WTC11 (cell line): ENCODE measurements at regions of chr2 and their contacts with region 1.

Region 1: GRCh38 chr2:58762176-58762781 is 521.2 kb upstream of the FANCL start:
- DNase-seq: peak; percentile 82
- ATAC-seq: peak; percentile 98
- H3K4me3 Mint-ChIP-seq: no peak overlapping the region
- H3K27ac Mint-ChIP-seq: no peak overlapping the region
- H3K4me1 Mint-ChIP-seq: peaks cover 37% of the 10 kb centered on the region
- H3K27me3 Mint-ChIP-seq: no peaks in the 10 kb centered on the region
- CTCF ChIP-seq: peak; percentile 74

Region 2: GRCh38 chr2:58798676-58799208 is 36.5 kb after region 1 on chr2:
- CTCF ChIA-PET with region 1: no interaction called
- POLR2A ChIA-PET with region 1: no interaction called
- DNase-seq: no peak
- ATAC-seq: no peak
- H3K4me3 Mint-ChIP-seq: no peak overlapping the region
- H3K27ac Mint-ChIP-seq: no peak overlapping the region
- H3K4me1 Mint-ChIP-seq: no peaks in the 10 kb centered on the region
- H3K27me3 Mint-ChIP-seq: no peaks in the 10 kb centered on the region
- CTCF ChIP-seq: no peak

Region 3: DNA sequence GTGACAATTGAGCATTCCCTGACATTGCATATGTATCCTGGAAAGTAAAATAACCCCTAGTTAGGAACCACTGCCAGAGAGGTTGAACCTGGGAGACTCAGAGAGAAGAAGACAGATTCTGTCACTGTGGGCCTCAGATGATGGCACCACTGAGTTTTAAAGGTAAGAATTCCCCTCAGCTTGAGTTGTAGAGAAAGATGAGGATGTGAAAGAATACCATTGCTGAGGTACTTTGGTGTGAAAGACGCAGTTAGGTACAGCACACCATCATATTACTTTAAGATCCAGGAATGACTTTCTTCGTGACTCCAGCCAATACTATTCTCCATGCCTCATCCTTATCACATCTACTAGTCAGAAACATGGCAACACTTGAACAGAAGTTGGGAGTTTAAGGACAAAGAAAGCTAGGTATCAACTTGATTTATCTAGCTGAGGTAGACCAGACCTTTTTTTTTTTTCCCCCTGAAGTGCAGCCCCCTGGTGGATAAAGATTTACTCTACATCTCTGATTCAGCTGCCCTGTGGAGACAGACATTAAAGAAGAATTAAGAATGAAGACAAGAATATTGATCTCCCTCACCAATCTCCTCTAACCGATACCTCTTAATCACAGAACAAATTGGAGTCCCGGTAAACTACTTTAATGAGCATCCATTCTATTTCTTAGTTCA is 109.3 kb after region 1 on chr2:
- CTCF ChIA-PET with region 1: interaction called, 17 read pairs
- POLR2A ChIA-PET with region 1: no interaction called
- DNase-seq: no peak
- ATAC-seq: peak; percentile 61; the same call in 1 of the 2 replicates
- H3K4me3 Mint-ChIP-seq: no peak overlapping the region
- H3K27ac Mint-ChIP-seq: peak overlapping the region; percentile 17; the same call in 1 of the 2 replicates
- H3K4me1 Mint-ChIP-seq: peaks cover 42% of the 10 kb centered on the region
- H3K27me3 Mint-ChIP-seq: peaks cover 9% of the 10 kb centered on the region
- CTCF ChIP-seq: peak; percentile 70

Region 4: DNA sequence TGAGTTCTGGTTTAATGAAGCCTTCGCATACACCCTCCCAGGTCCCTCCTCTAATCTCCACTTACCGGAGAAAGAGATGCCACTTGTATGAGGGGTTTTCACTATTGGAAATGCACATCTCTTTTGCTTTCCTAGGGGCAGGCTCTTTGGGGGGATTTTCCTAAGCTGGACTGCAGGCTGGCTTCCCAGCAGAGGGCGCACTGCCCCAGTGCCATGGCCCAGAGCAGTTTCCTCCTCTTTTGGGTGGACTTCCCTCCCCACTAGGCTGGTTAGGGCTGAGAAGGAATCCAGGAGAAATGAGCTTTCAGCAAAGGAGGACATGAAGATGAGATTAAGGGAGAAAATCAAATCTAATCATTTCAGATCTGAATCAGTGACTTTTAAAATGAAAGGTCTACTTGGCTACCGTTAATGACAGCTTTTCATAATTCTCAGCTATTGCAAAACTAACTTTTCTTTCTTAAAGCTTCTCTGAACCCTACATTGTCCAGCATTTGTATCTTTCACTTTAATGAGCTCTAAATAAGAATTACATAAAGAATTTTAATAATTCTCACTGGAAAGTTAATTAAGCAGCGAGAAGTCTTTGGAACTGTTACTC is 263.0 kb after region 1 on chr2:
- CTCF ChIA-PET with region 1: interaction called, 17 read pairs
- POLR2A ChIA-PET with region 1: interaction called, 4 read pairs
- DNase-seq: peak; percentile 74
- ATAC-seq: peak; percentile 96
- H3K4me3 Mint-ChIP-seq: no peak overlapping the region
- H3K27ac Mint-ChIP-seq: no peak overlapping the region
- H3K4me1 Mint-ChIP-seq: no peaks in the 10 kb centered on the region; the same call in 1 of the 2 replicates
- H3K27me3 Mint-ChIP-seq: no peaks in the 10 kb centered on the region
- CTCF ChIP-seq: peak; percentile 74

Region 5: GRCh38 chr2:59206361-59206760 is 444.1 kb after region 1 on chr2:
- CTCF ChIA-PET with region 1: no interaction called
- POLR2A ChIA-PET with region 1: no interaction called
- DNase-seq: no peak
- ATAC-seq: no peak
- H3K4me3 Mint-ChIP-seq: no peak overlapping the region
- H3K27ac Mint-ChIP-seq: no peak overlapping the region
- H3K4me1 Mint-ChIP-seq: peaks cover 5% of the 10 kb centered on the region; the same call in 1 of the 2 replicates
- H3K27me3 Mint-ChIP-seq: no peaks in the 10 kb centered on the region
- CTCF ChIP-seq: no peak